Prostate gland (tissue), 2 donors: ENCODE measurements at regions of chr12 and their contacts with region 1.

Region 1: GRCh38 chr12:48851883-48852733 is at the start of gene DDX23:
- DNase-seq: peak; percentile 93
- H3K4me3 ChIP-seq: peak within 1 kb of the TSS; percentile 73 to 92
- H3K27ac ChIP-seq: peak within 1 kb of the TSS; percentile 64 to 74
- H3K4me1 ChIP-seq: peaks cover 3% of the 10 kb centered on the region
- H3K27me3 ChIP-seq: no peaks in the 10 kb centered on the region
- CTCF ChIP-seq: peak in 2 of 4 experiments; percentile 21 to 30
- POLR2A ChIP-seq: peak; percentile 39
- total RNA-seq, gene DDX23: 71.0 to 87.2 TPM

Region 2: DNA sequence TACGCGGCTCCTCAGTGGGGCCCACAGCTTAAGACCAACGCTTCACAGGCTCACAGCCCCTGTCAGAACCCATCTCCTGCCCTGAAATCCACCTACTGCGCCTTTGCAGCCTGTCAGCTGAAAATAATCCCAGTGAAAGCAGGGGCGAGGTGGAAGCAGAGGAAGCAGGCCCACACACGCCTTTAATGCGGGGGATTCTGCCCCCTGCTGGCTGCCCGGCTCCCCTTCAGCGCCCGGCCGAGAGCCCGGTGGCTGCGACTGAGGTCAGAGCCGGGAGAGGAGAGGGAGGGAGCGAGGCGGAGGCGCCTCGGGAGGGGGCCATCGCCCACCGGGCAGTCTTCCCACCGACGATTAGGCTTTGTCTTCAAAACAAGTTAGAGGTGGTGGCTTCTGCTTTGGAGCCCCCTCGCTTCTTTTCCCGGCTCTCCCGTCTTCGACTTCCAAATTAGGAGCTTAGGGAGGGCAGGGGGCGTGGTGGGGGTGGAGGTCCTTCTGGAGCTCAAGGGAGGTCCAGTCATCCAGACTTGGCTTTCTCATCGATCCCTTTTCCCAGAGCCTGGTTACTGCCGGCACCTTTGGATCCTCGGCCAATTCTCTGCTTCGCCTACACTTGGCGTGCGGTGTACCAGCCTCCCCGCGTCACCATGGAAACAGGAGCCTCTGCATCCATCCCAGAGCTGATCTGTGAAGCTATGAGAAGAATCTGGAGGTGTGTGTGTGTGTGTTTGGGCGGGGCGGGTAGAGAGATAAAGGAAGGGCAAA is 38.7 kb after region 1 on chr12:
- intact Hi-C with region 1: loop called (anchors 1 kb)
- DNase-seq: peak; percentile 65
- H3K4me3 ChIP-seq: no peak overlapping the region
- H3K27ac ChIP-seq: no peak overlapping the region
- H3K4me1 ChIP-seq: no peaks in the 10 kb centered on the region
- H3K27me3 ChIP-seq: no peaks in the 10 kb centered on the region
- CTCF ChIP-seq: peak; percentile 54 to 94 (median 86)
- POLR2A ChIP-seq: no peak

Region 3: GRCh38 chr12:48936379-48936979 is 84.4 kb after region 1 on chr12:
- intact Hi-C with region 1: loop called (anchors 10 kb)
- DNase-seq: peak; percentile 43
- H3K4me3 ChIP-seq: no peak overlapping the region
- H3K27ac ChIP-seq: no peak overlapping the region
- H3K4me1 ChIP-seq: no peaks in the 10 kb centered on the region
- H3K27me3 ChIP-seq: no peaks in the 10 kb centered on the region
- CTCF ChIP-seq: peak; percentile 63 to 76 (median 66)
- POLR2A ChIP-seq: no peak

Region 4: DNA sequence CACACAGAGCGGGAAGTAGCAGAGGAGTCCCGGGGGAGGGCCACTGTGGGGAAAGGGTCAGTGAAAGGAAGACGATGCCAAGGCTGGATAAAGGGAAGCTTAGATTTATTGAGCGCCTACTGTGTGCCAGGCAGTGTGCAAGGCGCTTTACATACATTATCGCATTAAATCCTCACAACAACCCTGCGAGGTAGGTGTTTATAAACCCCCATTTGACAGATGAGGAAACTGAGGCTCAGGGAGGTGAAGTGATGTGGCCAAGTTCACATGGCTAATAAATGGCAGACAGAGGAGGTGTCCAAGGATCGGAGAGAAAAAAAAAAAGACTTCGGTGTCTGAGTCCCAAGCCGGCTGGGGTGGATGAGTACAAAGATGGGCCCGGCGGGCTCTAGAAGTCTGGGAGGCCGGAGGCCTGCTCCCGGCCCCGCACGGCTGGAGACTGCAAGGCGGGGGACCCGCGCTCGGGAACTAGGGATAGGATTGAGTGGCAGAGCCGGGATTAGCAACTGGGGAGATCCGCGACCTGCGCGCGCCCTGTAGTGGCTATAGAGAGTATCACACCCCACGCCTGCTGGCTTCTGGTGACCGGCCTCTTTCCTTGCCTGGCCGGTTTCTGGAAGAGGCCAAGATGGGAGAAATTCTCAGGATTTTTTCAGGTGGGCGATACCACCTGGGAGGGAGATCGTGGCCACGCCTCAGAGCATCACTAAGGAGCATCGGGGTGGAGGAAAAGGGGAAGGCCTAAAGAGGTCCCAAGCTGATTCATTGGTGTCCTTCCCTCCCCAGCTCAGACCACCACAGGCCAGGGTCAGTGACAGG is 143.2 kb after region 1 on chr12:
- intact Hi-C with region 1: loop called (anchors 5 kb)
- DNase-seq: peak; percentile 77
- H3K4me3 ChIP-seq: no peak overlapping the region
- H3K27ac ChIP-seq: no peak overlapping the region
- H3K4me1 ChIP-seq: peaks cover 19% of the 10 kb centered on the region
- H3K27me3 ChIP-seq: peaks cover 3% of the 10 kb centered on the region
- CTCF ChIP-seq: peak; percentile 45 to 85 (median 70)
- POLR2A ChIP-seq: no peak